Activated B cell treated with CpG ODN at 0.5 μM for 24 hours (primary cell): ENCODE measurements at regions of chr6 and their contacts with region 1.

Region 1: DNA sequence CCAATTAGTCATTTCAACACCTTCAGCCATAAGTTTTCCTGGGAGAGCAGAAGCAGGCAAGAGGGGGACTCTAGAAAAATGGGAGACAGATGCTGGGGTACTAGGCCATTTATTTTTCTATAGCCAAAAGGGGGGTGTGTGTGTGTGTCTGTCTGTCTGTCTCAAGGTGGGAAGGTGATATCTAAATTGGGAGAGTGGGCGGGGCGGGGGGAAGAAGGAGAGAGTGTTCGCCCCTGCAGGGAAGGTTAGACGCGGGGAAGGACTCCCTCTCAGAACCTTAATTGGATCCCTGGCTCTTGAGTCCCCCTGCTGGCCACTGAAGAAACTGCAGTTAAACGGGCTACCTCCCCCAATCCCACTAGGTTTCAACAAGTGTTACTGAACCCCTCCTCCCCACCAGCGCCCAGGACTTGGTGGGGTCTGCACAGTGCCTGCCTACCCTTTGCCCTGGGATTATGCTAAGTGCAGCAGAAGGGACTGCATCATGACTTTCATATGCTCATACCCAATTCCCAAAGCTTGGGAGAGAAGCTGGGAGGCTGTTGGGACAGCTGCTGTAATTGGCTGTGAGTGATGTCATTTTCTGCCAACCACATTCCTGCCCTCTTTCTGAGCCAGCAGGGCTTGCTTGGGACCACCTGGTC is 45.8 kb downstream of the FOXP4 start:
- DNase-seq: peak; percentile 73
- ATAC-seq: peak; percentile 85
- H3K4me3 Mint-ChIP-seq: no peak overlapping the region
- H3K27ac Mint-ChIP-seq: no peak overlapping the region
- H3K4me1 Mint-ChIP-seq: peaks cover 4% of the 10 kb centered on the region
- H3K27me3 Mint-ChIP-seq: no peaks in the 10 kb centered on the region
- CTCF ChIP-seq: peak; percentile 19

Region 2: GRCh38 chr6:41306187-41306854 is 285.7 kb before region 1 on chr6:
- CTCF ChIA-PET with region 1: no interaction called
- POLR2A ChIA-PET with region 1: no interaction called
- intact Hi-C with region 1: loop called (anchors 1 kb)
- DNase-seq: no peak
- ATAC-seq: no peak
- H3K4me3 Mint-ChIP-seq: no peak overlapping the region
- H3K27ac Mint-ChIP-seq: no peak overlapping the region
- H3K4me1 Mint-ChIP-seq: peaks cover 36% of the 10 kb centered on the region
- H3K27me3 Mint-ChIP-seq: no peaks in the 10 kb centered on the region
- CTCF ChIP-seq: peak; percentile 45

Region 3: GRCh38 chr6:41463062-41463930 is 128.7 kb before region 1 on chr6:
- CTCF ChIA-PET with region 1: interaction called, 50 read pairs
- POLR2A ChIA-PET with region 1: no interaction called
- intact Hi-C with region 1: loop called (anchors 1 kb)
- DNase-seq: no peak
- ATAC-seq: peak; percentile 82
- H3K4me3 Mint-ChIP-seq: no peak overlapping the region
- H3K27ac Mint-ChIP-seq: no peak overlapping the region
- H3K4me1 Mint-ChIP-seq: peaks cover 2% of the 10 kb centered on the region
- H3K27me3 Mint-ChIP-seq: peaks cover 31% of the 10 kb centered on the region
- CTCF ChIP-seq: peak; percentile 41